Posterior vena cava (tissue), 2 donors: ENCODE measurements at regions of chr17 and their contacts with region 1.

Region 1: GRCh38 chr17:55334285-55334684 is 69.5 kb downstream of the HLF start:
- DNase-seq: no peak

Region 2: GRCh38 chr17:55219934-55220333 is 114.4 kb before region 1 on chr17:
- intact Hi-C with region 1: loop called in 1 of 2 experiments (anchors 10 kb)
- DNase-seq: no peak

Region 3: GRCh38 chr17:55323518-55324295 is 10.6 kb before region 1 on chr17:
- intact Hi-C with region 1: loop called in 1 of 2 experiments (anchors 1 kb)
- DNase-seq: no peak

Region 4: GRCh38 chr17:55437159-55437605 is 102.9 kb after region 1 on chr17:
- intact Hi-C with region 1: no loop called
- DNase-seq: no peak

Region 5: GRCh38 chr17:55487695-55488429 is 153.6 kb after region 1 on chr17:
- intact Hi-C with region 1: no loop called
- DNase-seq: no peak